Activated naive CD4-positive, alpha-beta T cell treated with anti-CD3 and anti-CD28 coated beads for 36 hours (primary cell): ENCODE measurements at regions of chr10 and their contacts with region 1.

Region 1: GRCh38 chr10:8312781-8313180 is 258.3 kb downstream of the GATA3 start:
- DNase-seq: no peak
- H3K4me3 Mint-ChIP-seq: no peak overlapping the region
- H3K27ac Mint-ChIP-seq: no peak overlapping the region
- H3K4me1 Mint-ChIP-seq: peaks cover 32% of the 10 kb centered on the region
- H3K27me3 Mint-ChIP-seq: no peaks in the 10 kb centered on the region

Region 2: GRCh38 chr10:7872041-7872442 is 440.7 kb before region 1 on chr10:
- CTCF ChIA-PET with region 1: no interaction called
- intact Hi-C with region 1: loop called (anchors 10 kb)
- DNase-seq: no peak
- H3K4me3 Mint-ChIP-seq: peak overlapping the region; percentile 64
- H3K27ac Mint-ChIP-seq: no peak overlapping the region
- H3K4me1 Mint-ChIP-seq: peaks cover 6% of the 10 kb centered on the region
- H3K27me3 Mint-ChIP-seq: no peaks in the 10 kb centered on the region

Region 3: DNA sequence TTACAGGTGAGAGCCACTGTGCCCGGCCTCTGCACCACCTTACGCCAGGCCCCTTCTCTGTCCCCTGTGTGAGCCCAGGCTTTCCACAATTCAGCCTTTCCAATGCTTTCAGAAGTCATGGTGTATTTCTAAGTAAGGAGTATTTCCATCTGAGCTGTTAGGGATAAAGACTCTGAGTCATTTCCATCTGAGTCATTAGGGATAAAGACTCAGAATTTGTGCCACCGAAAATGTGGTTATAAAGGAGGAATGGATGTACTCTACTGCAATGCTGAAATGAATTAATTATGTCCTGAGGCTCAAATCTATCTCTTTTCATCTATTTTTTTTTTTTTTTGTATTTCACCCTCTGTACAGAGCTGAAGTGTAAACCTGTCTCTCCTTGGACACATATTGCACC is 174.3 kb before region 1 on chr10:
- CTCF ChIA-PET with region 1: no interaction called
- intact Hi-C with region 1: loop called (anchors 2 kb)
- DNase-seq: no peak
- H3K4me3 Mint-ChIP-seq: no peak overlapping the region
- H3K27ac Mint-ChIP-seq: no peak overlapping the region
- H3K4me1 Mint-ChIP-seq: peaks cover 35% of the 10 kb centered on the region
- H3K27me3 Mint-ChIP-seq: peaks cover 2% of the 10 kb centered on the region

Region 4: DNA sequence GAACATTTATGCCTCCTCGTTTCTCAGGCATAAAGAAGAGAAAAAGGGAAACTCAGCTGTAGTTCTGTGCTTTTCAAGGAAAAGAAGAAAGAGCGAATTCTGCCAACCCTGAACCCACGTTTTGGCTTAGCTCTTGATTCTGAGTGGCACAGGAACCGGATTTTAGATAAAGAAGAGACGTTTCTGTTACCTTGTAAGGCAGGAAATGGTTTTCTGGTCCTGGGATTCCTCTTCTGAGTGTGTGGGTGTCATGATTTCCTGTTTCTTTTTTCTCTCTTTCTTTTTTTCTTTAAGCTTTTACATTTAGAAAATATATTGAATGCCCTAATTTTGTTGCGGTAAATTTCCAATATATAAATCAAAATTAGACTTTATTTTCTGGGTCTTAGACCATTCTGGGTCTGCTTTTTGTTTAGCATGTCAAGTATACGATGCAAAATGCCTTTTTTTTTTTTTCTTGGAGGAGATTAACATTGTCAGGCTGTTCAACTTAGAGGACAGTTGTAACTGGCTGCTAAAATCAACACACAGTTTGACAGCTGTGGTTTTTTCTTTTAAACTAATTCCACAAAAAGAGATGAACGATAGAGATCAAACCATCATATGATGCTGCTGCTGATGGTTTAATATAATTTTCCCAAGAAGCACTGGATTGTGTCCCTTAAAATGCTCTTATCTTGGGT is 67.5 kb before region 1 on chr10:
- CTCF ChIA-PET with region 1: no interaction called
- intact Hi-C with region 1: no loop called
- DNase-seq: peak; percentile 30
- H3K4me3 Mint-ChIP-seq: no peak overlapping the region
- H3K27ac Mint-ChIP-seq: peak overlapping the region; percentile 37
- H3K4me1 Mint-ChIP-seq: peaks cover 38% of the 10 kb centered on the region
- H3K27me3 Mint-ChIP-seq: no peaks in the 10 kb centered on the region

Region 5: GRCh38 chr10:8325024-8325980 is 12.5 kb after region 1 on chr10:
- CTCF ChIA-PET with region 1: no interaction called
- intact Hi-C with region 1: loop called (anchors 1 kb)
- DNase-seq: peak; percentile 34
- H3K4me3 Mint-ChIP-seq: no peak overlapping the region
- H3K27ac Mint-ChIP-seq: no peak overlapping the region
- H3K4me1 Mint-ChIP-seq: peaks cover 23% of the 10 kb centered on the region
- H3K27me3 Mint-ChIP-seq: peaks cover 20% of the 10 kb centered on the region

Region 6: DNA sequence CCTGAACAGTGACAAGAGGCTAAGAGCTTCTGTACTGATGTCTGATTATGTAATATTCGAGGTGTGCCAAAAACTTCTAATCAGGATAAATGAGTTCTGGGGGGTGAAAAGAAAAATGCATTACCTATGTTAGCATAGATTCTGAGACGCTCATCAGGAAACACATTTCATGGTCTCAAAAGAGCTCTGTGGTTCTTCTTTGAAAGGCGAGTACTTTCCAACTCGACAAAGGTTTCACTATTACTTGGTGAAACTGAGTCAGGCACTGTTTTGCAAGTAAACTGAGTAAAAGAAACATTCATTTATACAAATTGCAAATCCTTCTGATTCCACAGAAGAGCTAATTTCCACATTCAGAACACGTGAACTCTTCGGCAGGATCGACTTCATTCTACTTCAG is 264.9 kb after region 1 on chr10:
- CTCF ChIA-PET with region 1: no interaction called
- intact Hi-C with region 1: loop called (anchors 5 kb)
- DNase-seq: peak; percentile 33
- H3K4me3 Mint-ChIP-seq: no peak overlapping the region
- H3K27ac Mint-ChIP-seq: no peak overlapping the region
- H3K4me1 Mint-ChIP-seq: peaks cover 28% of the 10 kb centered on the region
- H3K27me3 Mint-ChIP-seq: peaks cover 19% of the 10 kb centered on the region

Region 7: DNA sequence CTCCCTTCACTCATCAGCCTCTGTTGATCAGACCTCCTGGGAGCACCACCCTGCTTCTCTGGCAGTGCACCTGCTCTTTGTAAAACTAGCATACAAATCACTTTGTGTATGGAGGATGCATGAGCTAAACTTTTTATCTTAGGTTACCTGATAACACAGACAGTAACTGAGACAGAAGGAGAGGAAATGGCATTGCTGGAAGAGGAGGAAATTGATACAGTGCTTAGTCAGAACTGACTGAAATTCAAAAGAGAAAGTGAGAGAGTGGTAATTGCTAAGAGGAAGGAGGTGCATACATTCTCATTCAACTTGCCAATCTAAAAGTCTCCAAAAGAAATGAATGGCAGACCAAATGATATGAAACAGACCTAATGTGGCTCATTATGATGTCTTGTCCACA is 862.4 kb after region 1 on chr10:
- CTCF ChIA-PET with region 1: no interaction called
- intact Hi-C with region 1: loop called (anchors 5 kb)
- DNase-seq: no peak
- H3K4me3 Mint-ChIP-seq: no peak overlapping the region
- H3K27ac Mint-ChIP-seq: no peak overlapping the region
- H3K4me1 Mint-ChIP-seq: peaks cover 13% of the 10 kb centered on the region
- H3K27me3 Mint-ChIP-seq: peaks cover 4% of the 10 kb centered on the region